AG04450 (cell line): ENCODE measurements at regions of chr14 and their contacts with region 1.

Region 1: GRCh38 chr14:89178802-89179535 is 238.1 kb downstream of the FOXN3 start:
- DNase-seq: no peak
- H3K4me3 ChIP-seq: no peak overlapping the region
- H3K27ac ChIP-seq: no peak overlapping the region
- H3K27me3 ChIP-seq: no peaks in the 10 kb centered on the region
- CTCF ChIP-seq: no peak

Region 2: GRCh38 chr14:89214221-89214936 is 35.4 kb after region 1 on chr14:
- CTCF ChIA-PET with region 1: interaction called, 13 read pairs
- POLR2A ChIA-PET with region 1: no interaction called
- DNase-seq: no peak
- H3K4me3 ChIP-seq: no peak overlapping the region
- H3K27ac ChIP-seq: no peak overlapping the region
- H3K27me3 ChIP-seq: no peaks in the 10 kb centered on the region
- CTCF ChIP-seq: no peak

Region 3: DNA sequence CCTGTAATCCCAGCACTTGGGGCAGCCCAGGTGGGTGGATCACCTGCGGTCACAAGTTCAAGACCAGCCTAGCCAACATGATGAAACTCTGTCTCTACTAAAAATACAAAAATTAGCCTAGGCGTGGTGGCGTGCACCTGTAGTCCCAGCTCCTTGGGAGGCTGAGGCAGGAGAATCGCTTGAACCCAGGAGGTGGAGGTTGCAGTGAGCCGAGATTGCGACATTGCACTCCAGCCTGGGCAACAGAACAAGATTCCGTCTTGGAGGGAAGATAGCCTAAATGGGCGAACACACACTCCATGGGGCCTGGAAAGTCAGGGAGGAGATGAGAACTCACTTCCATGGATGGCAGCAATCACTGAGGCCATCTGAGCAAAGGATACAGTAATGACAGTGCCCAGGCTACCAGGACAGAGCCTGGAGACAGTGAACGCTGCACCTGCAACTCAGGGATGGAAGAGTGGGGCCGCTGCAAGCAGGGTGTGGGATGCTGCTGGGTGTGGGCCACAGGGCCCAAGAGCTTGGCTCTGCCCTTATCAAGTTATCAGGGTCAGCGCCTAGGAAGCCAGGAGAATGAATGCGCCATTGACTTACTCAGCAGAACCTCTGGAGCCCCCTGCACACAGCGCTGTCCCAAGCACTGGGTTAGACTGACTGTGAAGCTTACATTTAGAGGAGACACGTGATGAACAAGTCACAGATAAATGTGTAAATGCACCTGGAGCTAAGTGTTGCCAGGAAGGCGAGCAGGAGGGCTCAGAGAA is 209.1 kb after region 1 on chr14:
- CTCF ChIA-PET with region 1: interaction called, 11 read pairs
- POLR2A ChIA-PET with region 1: no interaction called
- DNase-seq: no peak
- H3K4me3 ChIP-seq: no peak overlapping the region
- H3K27ac ChIP-seq: no peak overlapping the region
- H3K27me3 ChIP-seq: no peaks in the 10 kb centered on the region
- CTCF ChIP-seq: no peak